ENCODE measurements at regions of chr16 and their contacts with region 1.

Region 1: DNA sequence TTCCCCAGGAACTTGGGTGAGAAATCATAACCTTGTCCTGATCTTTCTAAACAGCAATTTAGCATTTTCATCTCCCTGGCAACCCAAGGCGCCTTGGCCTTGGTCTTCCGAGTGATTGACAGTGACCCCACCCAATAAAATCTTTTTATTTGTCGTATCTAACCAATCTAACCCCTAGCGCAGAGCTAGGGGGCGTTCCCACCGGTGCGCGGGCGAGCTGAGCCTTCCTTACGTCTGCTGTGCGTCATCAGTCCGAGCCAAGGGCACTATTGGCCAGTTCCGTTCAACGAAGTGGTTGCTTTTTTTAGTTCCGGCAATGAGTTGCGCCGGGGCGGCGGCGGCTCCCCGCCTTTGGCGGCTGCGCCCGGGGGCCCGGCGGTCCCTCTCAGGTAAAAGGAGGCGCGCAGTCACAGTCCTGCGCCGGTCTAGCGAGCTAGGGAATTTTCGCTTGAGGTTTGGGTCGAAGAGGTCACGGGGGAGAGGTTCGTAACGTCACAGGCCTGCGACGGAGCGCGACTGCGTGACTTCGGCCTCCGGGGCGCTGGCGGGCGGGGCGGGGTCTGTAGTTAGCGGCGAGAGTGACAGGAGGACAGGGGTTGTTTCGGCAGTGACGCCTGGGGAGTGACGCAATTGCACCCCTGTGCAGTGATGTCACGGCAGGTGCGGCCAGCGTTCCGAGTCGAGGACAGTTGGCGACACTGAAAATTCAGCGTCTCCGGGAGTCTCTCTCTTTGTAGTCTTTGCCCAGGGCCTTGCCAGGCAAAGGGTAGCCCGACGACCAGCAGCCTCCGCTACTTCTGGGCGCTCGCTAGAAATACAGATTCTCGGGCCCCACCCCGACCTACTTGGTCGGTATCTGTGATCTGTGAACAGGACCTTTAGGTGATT is at the start of gene COQ7:
- DNase-seq: peak; percentile 93 to 100 (median 97)
- ATAC-seq: peak; percentile 86
- H3K4me3 ChIP-seq: peak within 1 kb of the TSS; percentile 84
- H3K4me3 Mint-ChIP-seq: peak within 1 kb of the TSS; percentile 96
- H3K27ac ChIP-seq: peak within 1 kb of the TSS; percentile 99 to 100
- H3K27ac Mint-ChIP-seq: peak within 1 kb of the TSS; percentile 86
- H3K4me1 ChIP-seq: peaks cover 12% of the 10 kb centered on the region
- H3K4me1 Mint-ChIP-seq: peaks cover 15% of the 10 kb centered on the region
- H3K27me3 ChIP-seq: no peaks in the 10 kb centered on the region
- H3K27me3 Mint-ChIP-seq: no peaks in the 10 kb centered on the region
- CTCF ChIP-seq: no peak
- total RNA-seq, gene COQ7: 7.9 to 9.1 TPM

Region 2: GRCh38 chr16:17476414-17477270 is 1591.0 kb before region 1 on chr16:
- CTCF ChIA-PET with region 1: no interaction called
- POLR2A ChIA-PET with region 1: no interaction called
- intact Hi-C with region 1: loop called in 1 of 2 experiments (anchors 10 kb)
- DNase-seq: peak; percentile 24 to 77 (median 42)
- ATAC-seq: peak; percentile 85
- H3K4me3 ChIP-seq: no peak overlapping the region
- H3K4me3 Mint-ChIP-seq: no peak overlapping the region
- H3K27ac ChIP-seq: no peak overlapping the region
- H3K27ac Mint-ChIP-seq: no peak overlapping the region
- H3K4me1 ChIP-seq: peaks cover 20% of the 10 kb centered on the region
- H3K4me1 Mint-ChIP-seq: peaks cover 33% of the 10 kb centered on the region
- H3K27me3 ChIP-seq: peaks cover 0 to 2% of the 10 kb centered on the region in 2 experiments
- H3K27me3 Mint-ChIP-seq: peaks cover 7% of the 10 kb centered on the region
- CTCF ChIP-seq: peak; percentile 73

Region 3: GRCh38 chr16:18801197-18801972 is 266.2 kb before region 1 on chr16 and contains the start of gene ARL6IP1:
- CTCF ChIA-PET with region 1: interaction called, 3 read pairs
- POLR2A ChIA-PET with region 1: interaction called, 5 read pairs
- intact Hi-C with region 1: loop called in 1 of 2 experiments (anchors 5 kb)
- DNase-seq: peak; percentile 98 to 100 (median 99)
- ATAC-seq: peak; percentile 93
- H3K4me3 ChIP-seq: peak within 1 kb of the TSS; percentile 98
- H3K4me3 Mint-ChIP-seq: peak within 1 kb of the TSS; percentile 96
- H3K27ac ChIP-seq: peak within 1 kb of the TSS; percentile 91
- H3K27ac Mint-ChIP-seq: peak within 1 kb of the TSS; percentile 88
- H3K4me1 ChIP-seq: peaks cover 44% of the 10 kb centered on the region
- H3K4me1 Mint-ChIP-seq: peaks cover 49% of the 10 kb centered on the region
- H3K27me3 ChIP-seq: no peaks in the 10 kb centered on the region
- H3K27me3 Mint-ChIP-seq: no peaks in the 10 kb centered on the region
- CTCF ChIP-seq: peak; percentile 84
- total RNA-seq, gene ARL6IP1: 109 to 111 TPM

Region 4: DNA sequence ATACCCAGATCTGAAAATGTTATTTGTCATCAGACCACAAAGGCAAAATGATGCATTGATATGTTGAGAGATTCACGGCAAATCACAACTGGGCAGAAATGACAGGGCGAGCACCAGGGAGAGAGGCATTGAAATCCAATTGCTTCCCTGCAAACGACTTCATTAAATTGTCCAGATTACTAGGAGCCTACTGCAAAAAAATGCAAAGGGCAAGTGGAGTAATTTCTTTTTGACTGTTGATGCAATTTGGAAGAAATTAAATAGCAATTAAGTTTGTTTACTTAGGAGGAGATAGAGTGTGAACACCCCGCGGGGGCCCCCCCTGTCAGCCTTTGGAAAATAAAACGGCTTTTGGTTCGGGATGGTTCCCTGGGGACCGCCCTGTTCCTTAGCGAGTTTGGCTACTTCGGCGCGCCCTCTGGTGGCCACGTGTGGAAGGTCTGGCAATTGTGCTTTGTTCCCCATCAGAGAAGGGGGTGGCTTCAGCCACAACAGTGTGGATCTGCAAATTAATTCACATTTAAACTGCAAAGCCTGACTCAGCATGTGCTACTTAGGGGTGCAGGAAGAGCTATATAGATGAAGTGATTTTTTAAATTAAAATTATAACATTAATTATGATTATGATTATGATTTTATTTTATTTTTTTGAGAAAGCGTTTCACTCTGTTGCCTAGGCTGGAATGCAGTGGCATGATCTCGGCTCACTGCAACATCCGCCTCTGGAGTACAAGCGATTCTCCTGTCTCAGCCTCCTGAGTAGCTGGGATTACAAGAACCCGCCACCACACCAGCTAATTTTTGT is 98.3 kb before region 1 on chr16:
- CTCF ChIA-PET with region 1: no interaction called
- POLR2A ChIA-PET with region 1: no interaction called
- intact Hi-C with region 1: loop called in 1 of 2 experiments (anchors 10 kb)
- DNase-seq: peak; percentile 50 to 86 (median 74)
- ATAC-seq: peak; percentile 72
- H3K4me3 ChIP-seq: peak overlapping the region; percentile 19
- H3K4me3 Mint-ChIP-seq: no peak overlapping the region
- H3K27ac ChIP-seq: no peak overlapping the region
- H3K27ac Mint-ChIP-seq: no peak overlapping the region
- H3K4me1 ChIP-seq: peaks cover 4% of the 10 kb centered on the region
- H3K4me1 Mint-ChIP-seq: no peaks in the 10 kb centered on the region
- H3K27me3 ChIP-seq: no peaks in the 10 kb centered on the region
- H3K27me3 Mint-ChIP-seq: no peaks in the 10 kb centered on the region
- CTCF ChIP-seq: peak; percentile 93

Region 5: DNA sequence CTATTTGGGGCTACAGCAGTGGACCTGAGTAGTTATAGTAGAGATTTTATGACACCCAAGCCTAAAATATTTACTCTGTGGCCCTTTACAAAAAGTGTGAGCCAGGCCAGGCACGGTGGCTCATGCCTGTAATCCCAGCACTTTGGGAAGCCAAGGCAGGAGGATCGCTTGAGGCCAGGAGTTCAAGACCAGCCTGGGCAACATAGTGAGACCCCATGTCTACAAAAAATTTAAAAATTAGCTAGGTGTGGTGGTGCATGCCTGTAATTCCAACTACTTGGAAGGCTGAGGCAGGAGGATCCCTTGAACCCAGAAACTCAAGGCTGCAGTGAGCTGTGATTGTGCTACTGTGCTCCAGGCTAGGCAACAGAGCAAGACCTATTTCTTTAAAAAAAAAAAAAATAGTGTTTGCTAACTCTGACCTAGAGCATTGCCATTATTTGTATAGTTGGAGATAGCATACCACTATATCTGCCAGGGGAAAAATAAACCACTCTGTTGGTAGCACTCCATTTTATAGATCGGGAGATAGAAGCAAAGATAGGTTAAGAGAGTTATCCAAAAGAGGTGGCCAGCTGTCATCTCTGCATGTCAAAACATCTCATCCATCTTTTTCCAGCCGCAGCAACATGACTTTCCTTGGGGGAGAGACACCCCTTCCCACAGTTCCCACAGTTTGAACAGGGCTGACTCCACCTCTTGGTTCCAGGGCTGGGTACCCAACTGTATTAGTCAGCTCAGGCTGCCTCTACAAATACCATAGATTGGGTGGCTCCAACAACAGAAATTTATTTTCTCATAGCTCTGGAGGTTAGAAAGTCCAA is 43.2 kb after region 1 on chr16:
- CTCF ChIA-PET with region 1: no interaction called
- POLR2A ChIA-PET with region 1: no interaction called
- intact Hi-C with region 1: no loop called
- DNase-seq: no peak
- ATAC-seq: no peak
- H3K4me3 ChIP-seq: no peak overlapping the region
- H3K4me3 Mint-ChIP-seq: no peak overlapping the region
- H3K27ac ChIP-seq: no peak overlapping the region
- H3K27ac Mint-ChIP-seq: no peak overlapping the region
- H3K4me1 ChIP-seq: peaks cover 11% of the 10 kb centered on the region
- H3K4me1 Mint-ChIP-seq: no peaks in the 10 kb centered on the region
- H3K27me3 ChIP-seq: peaks cover 11 to 13% of the 10 kb centered on the region in 2 experiments
- H3K27me3 Mint-ChIP-seq: peaks cover 50% of the 10 kb centered on the region
- CTCF ChIP-seq: no peak

Region 6: GRCh38 chr16:19717771-19718602 is 650.4 kb after region 1 on chr16 and contains the starts of genes IQCK and KNOP1:
- CTCF ChIA-PET with region 1: no interaction called
- POLR2A ChIA-PET with region 1: no interaction called
- intact Hi-C with region 1: loop called in 1 of 2 experiments (anchors 5 kb)
- DNase-seq: peak; percentile 74 to 98 (median 84)
- ATAC-seq: peak; percentile 93
- H3K4me3 ChIP-seq: peak within 1 kb of the TSS; percentile 73
- H3K4me3 Mint-ChIP-seq: peak within 1 kb of the TSS; percentile 93
- H3K27ac ChIP-seq: peak within 1 kb of the TSS in 1 of 2 donors; percentile 30
- H3K27ac Mint-ChIP-seq: peak within 1 kb of the TSS; percentile 33
- H3K4me1 ChIP-seq: peaks cover 23% of the 10 kb centered on the region
- H3K4me1 Mint-ChIP-seq: peaks cover 40% of the 10 kb centered on the region
- H3K27me3 ChIP-seq: no peaks in the 10 kb centered on the region
- H3K27me3 Mint-ChIP-seq: no peaks in the 10 kb centered on the region
- CTCF ChIP-seq: no peak
- total RNA-seq, gene IQCK: 1.6 to 1.7 TPM
- total RNA-seq, gene KNOP1: 3.5 to 4.1 TPM

Region 7: DNA sequence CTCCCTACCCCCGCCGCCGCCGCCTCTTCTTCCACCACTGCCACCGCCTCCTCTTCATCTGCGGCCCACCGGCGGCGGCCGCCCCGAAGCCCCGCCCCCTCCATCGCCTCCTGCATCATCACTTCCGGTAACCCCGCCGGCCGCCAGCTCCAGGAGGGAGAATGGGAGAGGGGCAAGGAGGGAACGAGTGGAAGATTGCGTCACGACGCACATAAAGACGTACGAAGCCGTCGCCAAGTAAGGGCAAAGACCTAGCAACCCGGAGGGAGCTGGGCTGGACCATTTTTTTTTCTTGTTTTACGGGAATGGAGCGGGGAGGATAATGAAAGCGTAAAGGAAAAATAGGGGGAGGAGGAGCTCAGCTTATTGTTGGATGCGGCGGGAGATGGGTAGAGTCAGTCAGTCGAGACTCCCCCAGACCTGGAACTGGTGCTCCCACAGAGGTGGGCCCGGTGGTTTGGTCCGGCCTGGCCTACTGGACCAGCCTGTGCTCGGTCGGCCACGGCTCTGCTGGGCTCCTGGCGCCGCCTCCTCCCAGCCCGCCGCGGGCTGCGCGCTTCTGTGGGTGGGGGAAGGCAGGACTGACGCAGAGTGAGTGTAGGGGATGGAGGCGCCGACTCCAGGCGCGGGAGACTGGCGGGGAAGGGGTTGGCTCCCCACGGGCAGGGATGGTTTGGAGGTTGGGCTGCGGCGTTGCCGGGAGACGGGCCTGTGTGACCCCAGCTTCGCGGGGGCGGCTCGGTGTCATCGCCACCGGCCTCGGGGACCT is 1832.9 kb after region 1 on chr16 and contains the starts of genes DCUN1D3 and LYRM1:
- CTCF ChIA-PET with region 1: no interaction called
- POLR2A ChIA-PET with region 1: no interaction called
- intact Hi-C with region 1: loop called in 1 of 2 experiments (anchors 10 kb)
- DNase-seq: peak; percentile 62 to 95 (median 78)
- ATAC-seq: peak; percentile 71
- H3K4me3 ChIP-seq: peak within 1 kb of the TSS; percentile 84
- H3K4me3 Mint-ChIP-seq: peak within 1 kb of the TSS; percentile 96
- H3K27ac ChIP-seq: peak within 1 kb of the TSS; percentile 85 to 95
- H3K27ac Mint-ChIP-seq: peak within 1 kb of the TSS; percentile 95
- H3K4me1 ChIP-seq: peaks cover 46% of the 10 kb centered on the region
- H3K4me1 Mint-ChIP-seq: peaks cover 82% of the 10 kb centered on the region
- H3K27me3 ChIP-seq: no peaks in the 10 kb centered on the region
- H3K27me3 Mint-ChIP-seq: no peaks in the 10 kb centered on the region
- CTCF ChIP-seq: no peak
- total RNA-seq, gene DCUN1D3: 1.9 TPM
- total RNA-seq, gene LYRM1: 13.3 to 14.0 TPM